Caki2 (cell line): ENCODE measurements at regions of chr20 and their contacts with region 1.

Region 1: DNA sequence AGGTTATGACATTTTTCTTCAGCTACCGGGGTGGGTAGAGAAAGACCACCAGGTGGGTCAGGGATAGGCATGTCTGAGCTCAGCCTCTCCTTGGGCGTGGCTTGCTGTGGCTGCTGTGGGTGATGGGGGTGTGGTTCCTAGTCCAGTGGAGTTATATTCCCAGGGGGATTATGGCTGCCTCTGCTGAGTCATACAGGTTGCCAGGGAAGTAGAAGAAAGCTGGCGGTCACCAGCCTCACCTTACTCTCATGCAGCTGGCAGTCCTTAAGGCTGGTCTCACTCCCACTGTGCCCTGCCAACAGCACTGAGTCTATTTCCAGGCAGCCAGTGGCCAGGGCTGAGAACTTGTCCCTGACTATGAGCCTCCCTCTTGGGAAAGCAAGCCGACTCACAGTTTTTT is 130.0 kb downstream of the SCP2D1 start:
- DNase-seq: no peak

Region 2: GRCh38 chr20:18276821-18277220 is 666.7 kb before region 1 on chr20:
- in situ Hi-C with region 1: no loop called
- DNase-seq: peak; percentile 70

Region 3: GRCh38 chr20:18589941-18590674 is 353.4 kb before region 1 on chr20:
- in situ Hi-C with region 1: no loop called
- DNase-seq: peak; percentile 11

Region 4: GRCh38 chr20:18632196-18633009 is 311.1 kb before region 1 on chr20:
- in situ Hi-C with region 1: loop called (anchors 25 kb)
- DNase-seq: peak; percentile 51

Region 5: GRCh38 chr20:18743665-18744440 is 199.7 kb before region 1 on chr20:
- in situ Hi-C with region 1: no loop called
- DNase-seq: peak; percentile 29